Mammary epithelial cell (primary cell): ENCODE measurements at regions of chr13 and their contacts with region 1.

Region 1: DNA sequence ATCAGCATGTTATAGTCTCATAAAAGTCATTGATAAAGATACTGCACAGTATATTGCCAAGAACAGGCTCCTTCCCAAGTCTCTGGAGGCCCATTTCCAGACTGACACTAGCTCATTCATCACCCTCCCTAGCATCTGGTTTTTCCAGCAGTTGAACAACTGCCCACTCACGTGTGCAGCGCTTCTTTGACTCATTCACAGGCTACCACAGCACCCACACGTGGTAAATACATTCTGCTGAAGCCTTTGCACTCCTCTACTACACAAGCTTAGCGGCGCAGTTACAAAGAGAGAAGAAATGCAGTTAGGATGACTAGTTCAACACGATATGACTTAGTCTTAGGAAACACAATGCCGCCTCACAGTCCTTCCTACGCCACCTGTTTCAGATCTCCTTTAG is 87.7 kb downstream of the DOCK9 start:
- DNase-seq: peak; percentile 86
- H3K4me3 ChIP-seq: no peak overlapping the region
- H3K27ac ChIP-seq: peak overlapping the region; percentile 43
- H3K4me1 ChIP-seq: peaks cover 21% of the 10 kb centered on the region
- H3K27me3 ChIP-seq: no peaks in the 10 kb centered on the region
- CTCF ChIP-seq: no peak

Region 2: DNA sequence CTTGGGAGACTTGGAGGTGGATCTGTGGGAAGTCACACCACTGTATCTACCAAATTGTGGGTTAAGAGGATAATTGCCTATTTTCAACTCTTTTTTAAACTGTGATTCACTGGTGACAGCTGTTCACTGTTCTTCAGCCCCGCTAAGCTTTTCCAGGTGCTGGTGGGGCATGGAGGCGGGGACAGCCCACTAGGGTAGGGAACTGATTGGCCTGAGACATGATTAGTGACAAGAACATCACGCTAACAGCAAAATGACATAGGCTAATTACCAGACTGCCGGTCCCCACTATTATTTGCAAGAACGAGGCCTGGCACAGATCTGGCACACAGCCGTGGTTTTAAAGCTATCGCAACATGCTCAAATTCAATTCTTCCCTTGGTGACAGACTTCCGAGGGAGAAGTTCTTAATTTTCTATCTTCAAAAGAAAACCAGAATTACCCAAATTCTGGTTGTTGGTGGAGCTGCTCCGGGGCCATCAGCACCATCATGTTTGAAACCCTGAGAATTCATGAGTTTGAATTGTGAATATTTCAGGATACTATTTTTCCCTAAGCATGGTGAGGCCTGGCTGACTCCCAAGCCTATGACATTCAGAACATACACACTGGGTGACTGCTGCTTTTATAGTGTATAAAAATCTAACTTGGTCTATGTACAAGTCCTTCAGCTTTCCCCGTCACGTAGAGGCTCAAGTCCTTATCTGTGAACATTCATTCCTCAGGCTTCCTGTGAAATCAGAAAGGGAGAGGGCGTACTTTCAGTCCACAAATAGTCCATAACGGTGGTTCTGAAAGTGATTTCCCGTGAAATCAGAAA is 69.8 kb after region 1 on chr13:
- CTCF ChIA-PET with region 1: no interaction called
- dilution Hi-C with region 1: loop called (anchors 5 kb)
- in situ Hi-C with region 1: no loop called
- intact Hi-C with region 1: no loop called
- DNase-seq: no peak
- H3K4me3 ChIP-seq: no peak overlapping the region
- H3K27ac ChIP-seq: no peak overlapping the region
- H3K4me1 ChIP-seq: peaks cover 17% of the 10 kb centered on the region
- H3K27me3 ChIP-seq: no peaks in the 10 kb centered on the region
- CTCF ChIP-seq: no peak

Region 3: GRCh38 chr13:99721606-99722337 is 831.6 kb after region 1 on chr13:
- CTCF ChIA-PET with region 1: no interaction called
- dilution Hi-C with region 1: no loop called
- in situ Hi-C with region 1: no loop called
- intact Hi-C with region 1: no loop called
- DNase-seq: no peak
- H3K4me3 ChIP-seq: no peak overlapping the region
- H3K27ac ChIP-seq: no peak overlapping the region
- H3K4me1 ChIP-seq: no peaks in the 10 kb centered on the region
- H3K27me3 ChIP-seq: no peaks in the 10 kb centered on the region
- CTCF ChIP-seq: no peak